PC-3 (cell line): ENCODE measurements at regions of chr18 and their contacts with region 1.

Region 1: GRCh38 chr18:22342625-22343024 is 75.1 kb downstream of the CTAGE1 start:
- DNase-seq: peak; percentile 93
- ATAC-seq: peak; percentile 86
- H3K4me3 ChIP-seq: no peak overlapping the region
- H3K27ac ChIP-seq: no peak overlapping the region
- H3K4me1 ChIP-seq: peaks cover 39% of the 10 kb centered on the region
- H3K27me3 ChIP-seq: no peaks in the 10 kb centered on the region
- CTCF ChIP-seq: no peak

Region 2: GRCh38 chr18:22159014-22159413 is 183.6 kb before region 1 on chr18:
- CTCF ChIA-PET with region 1: no interaction called
- POLR2A ChIA-PET with region 1: no interaction called
- intact Hi-C with region 1: no loop called
- DNase-seq: no peak
- ATAC-seq: no peak
- H3K4me3 ChIP-seq: no peak overlapping the region
- H3K27ac ChIP-seq: no peak overlapping the region
- H3K4me1 ChIP-seq: no peaks in the 10 kb centered on the region
- H3K27me3 ChIP-seq: no peaks in the 10 kb centered on the region
- CTCF ChIP-seq: no peak

Region 3: DNA sequence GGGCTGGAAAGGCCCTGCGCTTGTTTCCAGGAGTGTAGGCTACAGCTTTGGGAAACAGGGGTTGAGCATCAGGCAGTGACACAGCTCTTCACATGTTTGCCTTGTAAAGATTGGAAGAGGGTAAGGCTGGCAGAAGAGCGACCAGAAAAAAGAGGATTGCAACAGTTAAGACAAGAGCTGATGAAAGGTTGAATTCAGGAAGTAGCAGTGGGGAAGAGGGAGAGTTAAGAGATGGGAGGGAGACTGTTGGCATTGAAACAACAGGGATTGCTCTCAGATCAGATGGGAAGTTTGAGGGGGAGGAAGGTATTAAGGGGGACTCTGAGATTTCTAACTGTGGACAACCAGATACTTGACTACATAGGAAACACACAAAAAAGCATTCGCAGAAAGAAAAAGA is 21.9 kb before region 1 on chr18:
- CTCF ChIA-PET with region 1: no interaction called
- POLR2A ChIA-PET with region 1: interaction called, 10 read pairs
- intact Hi-C with region 1: no loop called
- DNase-seq: no peak
- ATAC-seq: no peak
- H3K4me3 ChIP-seq: no peak overlapping the region
- H3K27ac ChIP-seq: no peak overlapping the region
- H3K4me1 ChIP-seq: no peaks in the 10 kb centered on the region
- H3K27me3 ChIP-seq: no peaks in the 10 kb centered on the region
- CTCF ChIP-seq: no peak

Region 4: DNA sequence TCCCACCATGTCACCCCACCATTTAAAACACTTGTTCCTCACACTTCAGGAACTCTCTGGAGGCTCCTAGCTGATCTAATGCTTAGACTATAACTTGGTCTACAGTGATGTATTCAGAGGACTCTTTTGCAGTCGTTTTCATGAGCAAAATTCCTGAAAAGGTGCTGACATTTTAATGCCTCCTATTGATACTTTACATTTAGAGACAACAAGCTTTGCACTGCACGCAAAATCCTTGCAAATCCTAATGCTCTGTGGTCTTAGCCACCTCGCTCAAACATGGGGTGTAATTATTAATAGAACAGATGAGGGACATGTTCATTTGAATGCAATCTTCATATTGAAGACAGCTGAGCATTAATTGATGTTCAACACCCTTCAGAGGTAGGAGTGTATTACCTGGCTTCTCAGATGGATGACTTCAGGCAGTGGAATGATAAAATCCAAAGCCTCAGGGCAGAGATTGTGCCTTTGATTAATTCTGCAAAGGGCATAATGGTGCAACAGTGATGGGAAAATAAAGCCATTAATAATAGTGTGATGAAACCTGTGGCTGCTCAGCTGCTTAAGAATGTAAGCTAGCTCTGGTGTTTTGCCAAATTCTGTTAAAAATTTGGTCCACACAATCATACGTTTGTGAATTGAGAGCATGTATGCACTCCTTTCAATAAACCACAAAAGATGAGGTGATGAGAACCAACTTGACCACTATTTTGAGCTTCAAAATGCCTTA is 69.7 kb after region 1 on chr18:
- CTCF ChIA-PET with region 1: no interaction called
- POLR2A ChIA-PET with region 1: no interaction called
- intact Hi-C with region 1: no loop called
- DNase-seq: no peak
- ATAC-seq: no peak
- H3K4me3 ChIP-seq: no peak overlapping the region
- H3K27ac ChIP-seq: no peak overlapping the region
- H3K4me1 ChIP-seq: no peaks in the 10 kb centered on the region
- H3K27me3 ChIP-seq: no peaks in the 10 kb centered on the region
- CTCF ChIP-seq: no peak

Region 5: DNA sequence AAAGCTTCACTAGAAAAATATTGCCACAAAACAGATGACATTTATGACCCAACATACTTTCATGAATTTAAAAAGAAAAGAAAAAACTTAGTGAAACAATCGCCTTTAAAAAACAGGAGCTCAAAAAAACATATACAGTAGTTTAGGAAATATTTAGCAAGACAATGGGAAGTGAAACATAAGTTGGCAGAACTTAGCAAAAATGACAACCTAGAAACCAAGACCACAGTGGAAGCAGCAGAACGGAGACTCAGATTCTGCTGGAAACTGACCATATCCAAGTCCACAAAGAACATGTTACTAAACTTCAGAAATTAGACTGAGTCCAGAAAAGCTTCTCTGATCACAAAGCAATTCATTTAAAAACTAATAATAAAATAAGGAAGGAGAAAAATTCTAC is 116.9 kb after region 1 on chr18:
- CTCF ChIA-PET with region 1: no interaction called
- POLR2A ChIA-PET with region 1: no interaction called
- intact Hi-C with region 1: no loop called
- DNase-seq: no peak
- ATAC-seq: no peak
- H3K4me3 ChIP-seq: no peak overlapping the region
- H3K27ac ChIP-seq: no peak overlapping the region
- H3K4me1 ChIP-seq: no peaks in the 10 kb centered on the region
- H3K27me3 ChIP-seq: no peaks in the 10 kb centered on the region
- CTCF ChIP-seq: no peak

Region 6: GRCh38 chr18:22627526-22627925 is 284.9 kb after region 1 on chr18:
- CTCF ChIA-PET with region 1: no interaction called
- POLR2A ChIA-PET with region 1: no interaction called
- intact Hi-C with region 1: no loop called
- DNase-seq: peak; percentile 17
- ATAC-seq: no peak
- H3K4me3 ChIP-seq: no peak overlapping the region
- H3K27ac ChIP-seq: no peak overlapping the region
- H3K4me1 ChIP-seq: peaks cover 10% of the 10 kb centered on the region
- H3K27me3 ChIP-seq: no peaks in the 10 kb centered on the region
- CTCF ChIP-seq: no peak